CD8-positive, alpha-beta memory T cell (primary cell): ENCODE measurements at regions of chr11 and their contacts with region 1.

Region 1: GRCh38 chr11:128342511-128343134 is 244.7 kb downstream of the ETS1 start:
- DNase-seq: peak; percentile 14 to 68 (median 35)
- H3K4me3 ChIP-seq: peak overlapping the region; percentile 36
- H3K4me3 Mint-ChIP-seq: peak overlapping the region in 6 of 7 donors; percentile 34 to 78 (median 77)
- H3K27ac ChIP-seq: no peak overlapping the region
- H3K27ac Mint-ChIP-seq: peak overlapping the region; percentile 82 to 97 (median 92)
- H3K4me1 ChIP-seq: peaks cover 67% of the 10 kb centered on the region
- H3K4me1 Mint-ChIP-seq: peaks cover 64 to 86% (median 85%) of the 10 kb centered on the region in 3 donors
- H3K27me3 ChIP-seq: no peaks in the 10 kb centered on the region
- H3K27me3 Mint-ChIP-seq: no peaks in the 10 kb centered on the region

Region 2: DNA sequence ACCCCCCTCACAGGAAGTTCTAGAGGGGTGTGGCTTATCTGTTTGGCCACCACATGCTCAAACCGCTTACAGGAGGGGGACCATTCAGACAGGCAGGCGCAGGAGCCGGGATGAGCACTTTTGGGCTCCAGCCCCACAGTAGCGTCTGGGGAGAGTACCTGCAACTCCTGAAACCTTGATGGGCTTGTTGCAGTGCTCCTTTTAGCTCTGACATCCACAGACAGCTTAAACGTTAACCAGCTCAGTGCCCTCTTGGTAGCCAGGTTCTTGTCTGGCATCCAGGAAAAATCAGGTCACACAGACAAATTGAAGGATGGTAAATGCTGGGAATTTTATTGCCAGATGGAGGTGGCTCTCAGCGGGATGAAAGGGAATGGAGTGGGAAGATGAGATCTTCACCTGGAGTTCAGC is 81.6 kb before region 1 on chr11:
- CTCF ChIA-PET with region 1: no interaction called
- POLR2A ChIA-PET with region 1: no interaction called
- DNase-seq: no peak
- H3K4me3 ChIP-seq: no peak overlapping the region
- H3K4me3 Mint-ChIP-seq: no peak overlapping the region
- H3K27ac ChIP-seq: no peak overlapping the region
- H3K27ac Mint-ChIP-seq: no peak overlapping the region
- H3K4me1 ChIP-seq: no peaks in the 10 kb centered on the region
- H3K4me1 Mint-ChIP-seq: peaks cover 0 to 10% (median 1%) of the 10 kb centered on the region in 3 donors
- H3K27me3 ChIP-seq: no peaks in the 10 kb centered on the region
- H3K27me3 Mint-ChIP-seq: no peaks in the 10 kb centered on the region

Region 3: GRCh38 chr11:128271401-128271800 is 71.2 kb before region 1 on chr11:
- CTCF ChIA-PET with region 1: no interaction called
- POLR2A ChIA-PET with region 1: no interaction called
- DNase-seq: peak in 1 of 5 donors; percentile 60
- H3K4me3 ChIP-seq: no peak overlapping the region
- H3K4me3 Mint-ChIP-seq: peak overlapping the region in 6 of 7 donors; percentile 0 to 38 (median 18)
- H3K27ac ChIP-seq: peak overlapping the region; percentile 16
- H3K27ac Mint-ChIP-seq: peak overlapping the region; percentile 72 to 97 (median 86)
- H3K4me1 ChIP-seq: peaks cover 10% of the 10 kb centered on the region
- H3K4me1 Mint-ChIP-seq: peaks cover 24 to 41% (median 28%) of the 10 kb centered on the region in 3 donors
- H3K27me3 ChIP-seq: no peaks in the 10 kb centered on the region
- H3K27me3 Mint-ChIP-seq: peaks cover 0 to 1% of the 10 kb centered on the region in 2 donors

Region 4: DNA sequence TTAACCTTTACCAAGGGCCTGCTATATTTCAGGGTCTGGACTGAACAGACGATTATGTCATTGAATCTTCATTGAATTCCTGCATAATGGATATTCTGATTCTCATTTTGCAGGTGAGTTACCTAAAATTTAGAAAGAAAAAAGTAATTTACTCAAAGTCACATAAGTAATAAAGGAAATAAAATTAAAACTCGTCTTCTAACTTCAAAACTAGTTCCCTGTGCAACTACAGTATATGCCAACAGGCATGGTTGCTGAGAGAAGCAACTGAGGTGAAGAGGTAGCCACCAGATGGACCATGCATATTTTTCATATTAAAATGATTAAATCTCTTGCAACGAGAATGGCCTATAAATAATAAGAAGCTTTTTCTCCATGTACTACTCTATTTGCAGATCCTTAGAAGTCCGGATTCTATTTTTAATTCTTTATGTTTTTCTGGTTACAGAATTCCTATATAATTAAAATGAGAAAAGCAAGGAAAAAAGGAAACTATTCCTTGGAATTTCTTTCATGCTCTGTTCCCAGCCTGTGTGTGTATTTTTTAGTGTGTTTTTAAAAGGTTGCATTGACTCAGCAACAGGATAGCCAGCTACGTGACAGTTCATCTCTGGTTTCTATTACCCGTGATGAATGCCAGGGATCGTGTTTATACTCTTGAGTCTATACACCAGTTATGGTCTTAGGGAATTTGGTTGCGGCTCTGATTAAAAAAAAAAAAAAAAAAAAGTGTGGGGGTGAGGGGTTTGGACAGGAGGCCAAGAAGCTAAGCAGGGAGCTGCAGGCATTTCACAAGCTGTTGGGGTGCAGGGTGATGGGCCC is 58.0 kb after region 1 on chr11:
- CTCF ChIA-PET with region 1: interaction called, 3 read pairs
- POLR2A ChIA-PET with region 1: interaction called, 11 read pairs
- DNase-seq: no peak
- H3K4me3 ChIP-seq: no peak overlapping the region
- H3K4me3 Mint-ChIP-seq: no peak overlapping the region
- H3K27ac ChIP-seq: no peak overlapping the region
- H3K27ac Mint-ChIP-seq: no peak overlapping the region
- H3K4me1 ChIP-seq: no peaks in the 10 kb centered on the region
- H3K4me1 Mint-ChIP-seq: peaks cover 6 to 36% (median 21%) of the 10 kb centered on the region in 3 donors
- H3K27me3 ChIP-seq: no peaks in the 10 kb centered on the region
- H3K27me3 Mint-ChIP-seq: no peaks in the 10 kb centered on the region

Region 5: DNA sequence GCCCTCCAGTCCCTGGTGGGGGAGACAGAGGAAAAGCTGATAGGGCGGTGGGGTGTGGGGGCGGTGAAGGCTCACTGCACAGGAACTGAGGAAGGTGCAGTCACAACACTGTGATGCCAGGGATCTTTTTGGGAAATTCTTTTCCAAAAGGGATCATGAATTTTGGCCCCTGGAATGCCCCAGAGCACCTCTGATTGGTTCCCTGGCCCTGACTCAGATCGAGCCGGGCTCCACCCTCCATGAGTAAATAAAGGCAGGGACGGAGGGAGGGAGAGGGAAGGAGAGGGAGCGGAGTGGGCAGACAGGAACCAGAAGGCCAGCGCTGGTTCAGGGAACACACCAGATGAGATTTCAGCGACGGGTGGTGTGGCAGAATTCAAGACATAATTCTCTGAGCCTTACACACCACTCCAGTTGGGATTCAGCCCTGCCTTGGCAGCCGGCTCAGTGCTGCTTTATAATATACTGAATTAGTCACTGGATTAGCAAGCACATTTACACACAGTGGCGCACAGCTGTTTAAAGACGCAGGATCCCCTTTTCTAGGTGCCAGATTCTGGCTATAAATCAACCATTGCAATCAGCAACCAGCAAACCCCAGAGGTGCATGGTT is 164.5 kb after region 1 on chr11:
- CTCF ChIA-PET with region 1: interaction called, 3 read pairs
- POLR2A ChIA-PET with region 1: interaction called, 13 read pairs
- DNase-seq: no peak
- H3K4me3 ChIP-seq: peak overlapping the region; percentile 97
- H3K4me3 Mint-ChIP-seq: peak overlapping the region; percentile 81 to 99 (median 98)
- H3K27ac ChIP-seq: peak overlapping the region; percentile 48
- H3K27ac Mint-ChIP-seq: peak overlapping the region; percentile 93 to 99 (median 98)
- H3K4me1 ChIP-seq: peaks cover 99% of the 10 kb centered on the region
- H3K4me1 Mint-ChIP-seq: peaks cover 99 to 100% (median 100%) of the 10 kb centered on the region in 3 donors
- H3K27me3 ChIP-seq: no peaks in the 10 kb centered on the region
- H3K27me3 Mint-ChIP-seq: no peaks in the 10 kb centered on the region